CD4-positive, alpha-beta memory T cell (primary cell): ENCODE measurements at regions of chr13 and their contacts with region 1.

Region 1: GRCh38 chr13:51803422-51804294 is at the start of gene DHRS12:
- DNase-seq: peak; percentile 92 to 96 (median 95)
- H3K4me3 ChIP-seq: peak within 1 kb of the TSS; percentile 76 to 88
- H3K4me3 Mint-ChIP-seq: peak within 1 kb of the TSS; percentile 91 to 98 (median 96)
- H3K27ac ChIP-seq: peak within 1 kb of the TSS; percentile 96
- H3K27ac Mint-ChIP-seq: peak within 1 kb of the TSS; percentile 98 to 100 (median 100)
- H3K4me1 ChIP-seq: peaks cover 45% of the 10 kb centered on the region
- H3K4me1 Mint-ChIP-seq: peaks cover 34 to 59% (median 47%) of the 10 kb centered on the region in 4 donors
- H3K27me3 ChIP-seq: no peaks in the 10 kb centered on the region
- H3K27me3 Mint-ChIP-seq: no peaks in the 10 kb centered on the region
- total RNA-seq, gene DHRS12: 23.6 to 24.3 TPM

Region 2: GRCh38 chr13:51583875-51584730 is 219.6 kb before region 1 on chr13 and contains the start of gene WDFY2:
- CTCF ChIA-PET with region 1: interaction called, 11 read pairs
- POLR2A ChIA-PET with region 1: interaction called, 15 read pairs
- intact Hi-C with region 1: loop called (anchors 1 kb)
- DNase-seq: peak; percentile 99 to 100 (median 100)
- H3K4me3 ChIP-seq: peak within 1 kb of the TSS; percentile 65 to 92
- H3K4me3 Mint-ChIP-seq: peak within 1 kb of the TSS; percentile 97 to 100 (median 99)
- H3K27ac ChIP-seq: peak within 1 kb of the TSS; percentile 88
- H3K27ac Mint-ChIP-seq: peak within 1 kb of the TSS; percentile 96 to 100 (median 100)
- H3K4me1 ChIP-seq: peaks cover 26% of the 10 kb centered on the region
- H3K4me1 Mint-ChIP-seq: peaks cover 27 to 44% (median 35%) of the 10 kb centered on the region in 4 donors
- H3K27me3 ChIP-seq: no peaks in the 10 kb centered on the region
- H3K27me3 Mint-ChIP-seq: no peaks in the 10 kb centered on the region
- total RNA-seq, gene WDFY2: 20.0 to 21.8 TPM

Region 3: DNA sequence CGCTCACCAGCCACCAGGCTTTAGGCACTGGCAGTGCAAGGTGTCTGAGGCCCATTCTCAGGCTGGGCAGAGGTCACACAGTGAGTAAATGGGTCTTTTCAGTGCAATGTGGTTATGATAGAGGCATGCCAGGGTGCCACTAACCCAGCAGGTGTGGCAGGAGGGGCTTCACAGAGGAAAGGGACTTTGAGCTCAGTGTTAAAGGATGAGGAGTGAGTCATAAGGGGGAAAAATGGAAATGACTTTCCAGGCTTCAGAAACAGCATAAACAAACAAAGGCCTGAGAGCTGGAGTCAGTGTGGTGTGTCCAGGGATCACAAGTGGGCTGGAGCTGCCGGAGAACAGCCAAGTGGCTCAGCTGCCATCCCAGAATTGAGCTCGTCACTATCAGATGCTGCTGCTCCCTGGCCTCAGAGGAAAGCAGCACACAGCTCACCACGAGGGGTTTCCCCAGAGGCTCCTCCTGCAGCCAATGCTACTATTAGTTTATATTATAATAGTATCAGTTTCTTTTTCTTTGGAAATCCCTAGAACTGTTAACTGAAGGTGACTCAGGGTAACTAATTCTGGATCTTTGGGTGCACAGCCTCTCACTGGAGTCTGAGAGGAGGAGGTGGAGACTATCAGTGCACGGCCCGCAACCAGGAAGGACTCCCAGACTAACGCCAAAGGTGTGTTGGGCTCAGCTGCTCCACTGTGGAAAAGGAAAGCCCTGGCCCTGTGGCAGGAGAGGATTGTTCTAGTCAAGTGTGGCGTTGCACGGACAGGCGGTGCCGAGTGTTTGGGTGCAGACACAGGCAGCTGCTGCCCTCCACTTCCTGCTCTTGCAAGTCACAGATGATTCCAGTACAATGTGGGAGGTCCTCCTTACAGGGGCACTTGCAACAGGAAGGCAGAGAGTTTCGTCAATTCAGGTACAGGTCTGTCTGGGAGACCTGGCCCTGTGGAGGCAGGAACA is 39.2 kb before region 1 on chr13:
- CTCF ChIA-PET with region 1: interaction called, 10 read pairs
- POLR2A ChIA-PET with region 1: interaction called, 15 read pairs
- intact Hi-C with region 1: loop called (anchors 2 kb)
- DNase-seq: peak; percentile 35 to 82 (median 55)
- H3K4me3 ChIP-seq: peak overlapping the region in 1 of 2 donors; percentile 17
- H3K4me3 Mint-ChIP-seq: peak overlapping the region; percentile 80 to 91 (median 82)
- H3K27ac ChIP-seq: peak overlapping the region; percentile 80
- H3K27ac Mint-ChIP-seq: peak overlapping the region; percentile 92 to 96 (median 95)
- H3K4me1 ChIP-seq: peaks cover 22% of the 10 kb centered on the region
- H3K4me1 Mint-ChIP-seq: peaks cover 15 to 35% (median 24%) of the 10 kb centered on the region in 4 donors
- H3K27me3 ChIP-seq: no peaks in the 10 kb centered on the region
- H3K27me3 Mint-ChIP-seq: no peaks in the 10 kb centered on the region

Region 4: GRCh38 chr13:51814825-51815650 is 11.4 kb after region 1 on chr13:
- CTCF ChIA-PET with region 1: interaction called, 67 read pairs
- POLR2A ChIA-PET with region 1: interaction called, 288 read pairs
- intact Hi-C with region 1: loop called (anchors 1 kb)
- DNase-seq: peak; percentile 74 to 79 (median 77)
- H3K4me3 ChIP-seq: peak overlapping the region in 1 of 2 donors; percentile 12
- H3K4me3 Mint-ChIP-seq: peak overlapping the region; percentile 52 to 83 (median 70)
- H3K27ac ChIP-seq: peak overlapping the region; percentile 43
- H3K27ac Mint-ChIP-seq: peak overlapping the region; percentile 78 to 97 (median 90)
- H3K4me1 ChIP-seq: peaks cover 62% of the 10 kb centered on the region
- H3K4me1 Mint-ChIP-seq: peaks cover 47 to 85% (median 64%) of the 10 kb centered on the region in 4 donors
- H3K27me3 ChIP-seq: no peaks in the 10 kb centered on the region
- H3K27me3 Mint-ChIP-seq: no peaks in the 10 kb centered on the region

Region 5: DNA sequence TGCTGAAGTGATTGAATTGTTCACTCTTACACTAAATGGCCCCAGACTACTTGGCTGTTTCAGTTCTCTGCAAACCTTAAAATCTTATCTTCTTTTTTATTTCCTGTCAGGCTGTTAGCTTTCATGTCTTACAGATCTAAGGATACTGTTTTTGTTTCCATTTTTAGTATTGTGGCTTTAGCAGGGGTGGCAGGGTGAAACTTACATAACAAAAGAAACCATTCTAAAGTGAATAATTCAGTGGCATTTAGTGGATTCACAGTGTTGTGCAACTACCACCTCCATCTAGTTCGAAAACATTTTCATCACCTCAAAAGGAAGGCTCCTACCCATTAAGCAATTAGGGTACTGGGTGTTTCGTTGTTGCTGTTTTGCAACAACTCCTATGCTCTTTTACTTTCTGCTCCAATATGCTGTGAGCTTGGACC is 21.5 kb after region 1 on chr13:
- CTCF ChIA-PET with region 1: interaction called, 15 read pairs
- POLR2A ChIA-PET with region 1: interaction called, 288 read pairs
- intact Hi-C with region 1: loop called (anchors 1 kb)
- DNase-seq: peak; percentile 57 to 84 (median 79)
- H3K4me3 ChIP-seq: peak overlapping the region; percentile 31 to 56
- H3K4me3 Mint-ChIP-seq: peak overlapping the region; percentile 86 to 95 (median 90)
- H3K27ac ChIP-seq: peak overlapping the region; percentile 65
- H3K27ac Mint-ChIP-seq: peak overlapping the region; percentile 88 to 95 (median 94)
- H3K4me1 ChIP-seq: peaks cover 81% of the 10 kb centered on the region
- H3K4me1 Mint-ChIP-seq: peaks cover 56 to 99% (median 77%) of the 10 kb centered on the region in 4 donors
- H3K27me3 ChIP-seq: no peaks in the 10 kb centered on the region
- H3K27me3 Mint-ChIP-seq: no peaks in the 10 kb centered on the region

Region 6: GRCh38 chr13:51832471-51833152 is 29.0 kb after region 1 on chr13:
- CTCF ChIA-PET with region 1: interaction called, 28 read pairs
- POLR2A ChIA-PET with region 1: interaction called, 288 read pairs
- intact Hi-C with region 1: loop called (anchors 1 kb)
- DNase-seq: peak; percentile 72 to 78 (median 73)
- H3K4me3 ChIP-seq: no peak overlapping the region
- H3K4me3 Mint-ChIP-seq: peak overlapping the region in 7 of 8 donors; percentile 6 to 67 (median 44)
- H3K27ac ChIP-seq: no peak overlapping the region
- H3K27ac Mint-ChIP-seq: peak overlapping the region; percentile 6 to 85 (median 66)
- H3K4me1 ChIP-seq: peaks cover 18% of the 10 kb centered on the region
- H3K4me1 Mint-ChIP-seq: peaks cover 16 to 43% (median 34%) of the 10 kb centered on the region in 4 donors
- H3K27me3 ChIP-seq: no peaks in the 10 kb centered on the region
- H3K27me3 Mint-ChIP-seq: no peaks in the 10 kb centered on the region

Region 7: DNA sequence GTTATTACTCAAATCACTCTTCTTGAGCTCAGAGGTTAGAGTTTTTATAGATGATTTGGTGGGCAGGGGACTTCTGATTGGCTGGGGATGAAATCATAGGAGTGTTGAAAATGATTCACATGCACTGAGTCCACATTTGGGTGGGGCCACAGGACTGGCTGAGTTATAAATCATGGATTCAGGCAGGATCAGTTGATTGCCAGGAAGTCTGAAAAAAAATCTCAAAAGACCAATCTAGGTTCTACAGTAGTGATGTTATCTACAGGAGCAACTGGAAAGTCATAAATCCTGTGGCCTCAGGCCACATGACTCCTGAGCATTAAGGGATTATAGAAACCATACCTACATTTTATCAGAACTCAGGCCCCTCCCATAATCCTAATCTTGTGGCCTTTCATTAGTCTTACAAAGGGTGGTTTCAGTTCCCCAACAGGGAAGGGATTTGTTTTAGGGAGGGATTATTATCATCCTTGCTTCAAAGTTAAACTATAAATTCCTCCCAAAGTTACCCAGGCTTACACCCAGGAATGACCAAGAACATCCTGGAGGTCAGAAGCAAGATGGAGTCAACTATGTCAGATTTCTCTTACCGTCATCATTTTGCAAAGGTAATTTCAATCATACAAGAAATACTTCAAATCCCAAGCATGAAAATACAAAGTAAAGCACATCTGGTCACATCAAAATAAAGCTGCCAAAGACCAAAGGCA is 52.5 kb after region 1 on chr13:
- CTCF ChIA-PET with region 1: no interaction called
- POLR2A ChIA-PET with region 1: no interaction called
- intact Hi-C with region 1: no loop called
- DNase-seq: no peak
- H3K4me3 ChIP-seq: no peak overlapping the region
- H3K4me3 Mint-ChIP-seq: no peak overlapping the region
- H3K27ac ChIP-seq: no peak overlapping the region
- H3K27ac Mint-ChIP-seq: no peak overlapping the region
- H3K4me1 ChIP-seq: no peaks in the 10 kb centered on the region
- H3K4me1 Mint-ChIP-seq: no peaks in the 10 kb centered on the region
- H3K27me3 ChIP-seq: no peaks in the 10 kb centered on the region
- H3K27me3 Mint-ChIP-seq: peaks cover 14% of the 10 kb centered on the region in 2 donors

Region 8: DNA sequence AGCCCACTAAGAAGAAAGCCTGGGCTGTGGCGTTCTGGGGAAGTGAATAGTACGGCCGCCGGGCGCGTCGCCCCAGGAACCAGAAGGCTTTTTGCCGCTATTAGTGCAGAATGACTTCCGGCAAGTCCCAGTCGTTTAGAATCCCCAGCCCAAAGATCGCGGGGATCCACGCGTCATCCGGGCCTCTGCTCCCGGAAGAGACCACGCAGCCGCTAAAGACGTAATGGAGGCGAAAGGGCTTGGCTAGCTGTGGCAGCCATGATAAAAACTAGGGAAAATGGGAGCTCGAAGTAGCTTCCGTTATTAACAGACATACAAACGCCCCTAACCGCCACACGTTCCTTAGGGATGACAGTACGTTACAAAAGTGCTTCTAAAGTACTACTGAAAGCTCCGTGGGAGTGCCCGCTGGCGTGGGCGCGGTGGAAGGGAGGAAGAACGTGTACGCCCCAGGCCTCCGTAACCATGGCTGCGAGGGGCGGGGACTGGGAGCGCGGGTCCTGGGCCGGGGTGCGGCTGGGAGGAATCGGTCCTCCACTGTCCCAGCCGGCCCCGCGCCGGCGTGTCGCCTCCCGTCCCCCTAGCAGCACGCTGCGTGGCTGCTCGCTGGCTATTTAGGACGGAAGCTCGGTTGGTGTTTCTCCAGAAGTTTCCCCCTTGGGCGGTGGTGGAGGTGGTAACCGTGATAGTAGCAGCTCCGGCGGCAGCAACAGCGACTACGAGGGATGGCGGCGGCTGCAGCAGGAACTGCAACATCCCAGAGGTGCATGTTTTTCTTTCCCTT is 848.7 kb after region 1 on chr13 and contains the start of gene SUGT1:
- CTCF ChIA-PET with region 1: no interaction called
- POLR2A ChIA-PET with region 1: no interaction called
- intact Hi-C with region 1: loop called (anchors 2 kb)
- DNase-seq: peak; percentile 96 to 98 (median 97)
- H3K4me3 ChIP-seq: peak within 1 kb of the TSS; percentile 61 to 94
- H3K4me3 Mint-ChIP-seq: no peak within 1 kb of the TSS
- H3K27ac ChIP-seq: peak within 1 kb of the TSS; percentile 96
- H3K27ac Mint-ChIP-seq: no peak within 1 kb of the TSS
- H3K4me1 ChIP-seq: peaks cover 46% of the 10 kb centered on the region
- H3K4me1 Mint-ChIP-seq: peaks cover 8 to 16% (median 13%) of the 10 kb centered on the region in 4 donors
- H3K27me3 ChIP-seq: no peaks in the 10 kb centered on the region
- H3K27me3 Mint-ChIP-seq: no peaks in the 10 kb centered on the region
- total RNA-seq, gene SUGT1: 40.4 to 42.5 TPM